ENCODE measurements at regions of chr22 and their contacts with region 1.

Region 1: DNA sequence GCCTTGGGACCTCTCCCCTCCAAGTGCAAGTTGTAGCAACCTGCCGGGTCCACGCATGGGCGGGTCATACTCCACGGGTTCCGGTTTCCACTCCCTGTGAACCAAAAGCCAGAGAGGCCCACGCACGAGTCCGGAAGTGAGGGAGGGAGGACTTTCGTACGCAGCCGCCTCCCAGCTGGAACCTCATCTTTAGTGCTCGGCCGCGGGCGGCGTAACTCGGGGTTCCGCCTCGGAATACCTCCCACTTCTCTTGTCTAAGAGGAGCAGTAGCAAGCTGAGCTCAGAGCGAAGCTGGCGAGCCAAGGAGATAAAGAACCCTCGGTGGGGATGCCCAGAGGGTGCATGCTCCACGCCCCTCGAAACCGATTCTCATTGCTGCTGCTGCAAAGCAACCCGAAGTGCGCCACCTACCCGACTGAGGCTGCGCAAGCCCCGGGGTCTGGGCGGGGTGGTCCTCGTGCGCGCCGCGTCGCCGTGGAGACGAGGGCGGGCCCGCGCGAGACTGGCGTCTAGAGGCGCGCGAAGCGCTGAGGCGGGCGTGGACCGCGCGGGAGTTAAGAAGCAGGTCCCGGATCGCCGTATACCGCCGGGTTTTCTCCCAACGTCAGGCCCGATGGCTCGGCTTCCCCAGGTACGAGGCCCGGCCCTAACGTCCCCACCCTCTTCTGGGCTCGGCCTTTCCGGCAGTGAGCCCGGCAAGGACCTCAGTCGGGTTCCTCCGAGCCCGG is at the start of gene SFI1:
- DNase-seq: peak; percentile 96
- ATAC-seq: peak; percentile 99
- total RNA-seq, gene SFI1: 5.7 TPM

Region 2: DNA sequence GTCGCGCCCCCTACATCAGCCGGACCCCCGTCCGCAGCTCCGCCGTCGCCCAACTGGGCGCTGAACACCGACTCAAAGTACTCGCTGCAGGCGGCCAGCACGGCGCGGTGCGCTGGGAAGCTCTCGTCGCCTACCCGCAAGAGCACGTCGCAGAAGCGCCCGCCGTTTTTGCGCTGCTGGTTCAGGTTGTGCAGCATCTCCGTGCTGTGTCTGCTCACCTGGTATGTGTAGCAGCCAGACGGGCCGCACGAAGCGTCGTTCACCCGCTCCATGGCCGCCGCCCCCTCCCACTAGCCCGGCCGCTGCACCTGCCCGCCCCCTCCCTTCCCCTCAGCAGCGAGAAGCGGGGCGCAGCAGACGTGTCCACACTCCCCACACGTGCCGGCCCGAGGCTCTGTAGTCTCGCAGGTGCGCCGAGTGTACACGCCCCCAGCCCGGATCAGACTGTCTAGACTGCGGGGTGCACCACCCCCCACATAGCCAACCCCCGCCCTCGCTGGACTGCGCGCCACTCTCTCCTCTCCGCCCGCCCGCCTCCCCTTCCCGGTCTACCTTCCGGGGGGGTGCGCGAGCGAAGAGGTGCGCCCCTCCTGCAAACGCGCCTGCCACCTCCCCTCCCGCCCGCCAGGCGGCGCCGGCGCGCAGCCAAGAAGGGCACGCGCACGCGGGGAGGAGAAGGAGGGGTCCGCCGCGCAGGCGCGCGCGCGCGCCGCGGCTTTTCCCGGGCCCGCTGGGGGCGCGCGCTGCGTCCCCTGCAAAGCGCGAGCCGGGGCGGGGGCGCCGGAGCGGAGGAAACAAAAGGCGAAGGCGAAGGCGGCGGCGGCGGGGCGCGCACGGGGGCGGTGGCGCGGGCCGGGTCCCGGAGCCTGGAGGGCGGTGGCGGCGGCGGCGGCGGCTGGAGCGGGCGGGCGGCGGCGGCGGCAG is 150.6 kb before region 1 on chr22:
- intact Hi-C with region 1: loop called (anchors 5 kb)
- DNase-seq: peak; percentile 91
- ATAC-seq: peak; percentile 80

Region 3: GRCh38 chr22:31556627-31557203 is 60.5 kb after region 1 on chr22:
- intact Hi-C with region 1: no loop called
- DNase-seq: no peak
- ATAC-seq: no peak